ENCODE measurements at regions of chr5 and their contacts with region 1.

Region 1: DNA sequence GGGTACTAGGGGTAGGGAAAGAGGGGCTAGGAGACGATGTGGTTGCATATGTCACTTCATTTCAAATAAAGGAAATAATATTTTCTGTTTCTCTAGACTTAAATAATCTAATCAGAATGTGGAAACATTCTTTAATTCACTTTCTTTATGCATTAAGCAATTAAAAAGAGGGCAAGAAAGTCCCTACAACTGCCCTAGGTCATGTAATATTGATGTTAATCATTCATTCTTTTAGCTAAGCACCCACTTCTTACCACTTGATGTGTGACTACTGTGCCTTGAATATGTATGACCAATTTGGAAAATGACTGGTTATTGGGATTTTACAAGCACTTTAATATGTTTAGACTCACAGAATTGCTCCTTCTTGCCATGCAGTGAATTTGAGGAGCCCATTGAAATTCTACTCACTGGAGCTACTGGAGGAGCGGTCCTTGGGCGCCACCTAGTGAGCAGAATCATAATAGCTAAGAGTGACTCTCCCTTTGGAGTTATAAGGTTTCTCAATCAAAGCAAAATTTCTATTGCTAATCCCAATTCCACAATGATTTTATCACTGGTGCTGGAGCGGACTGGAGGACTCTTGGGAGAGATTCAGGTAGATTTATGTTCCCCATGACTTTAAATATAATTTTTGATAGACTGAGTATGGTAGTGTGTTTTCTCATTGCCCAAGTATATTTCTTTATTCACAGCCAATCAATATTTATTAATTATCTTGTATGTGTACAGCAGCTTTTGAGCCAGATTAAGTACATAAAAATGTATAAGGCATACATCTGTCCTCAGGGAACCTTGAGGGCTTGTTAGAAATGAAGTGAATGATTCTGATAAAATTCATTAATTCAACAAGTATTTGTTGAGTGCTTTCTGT is 225.1 kb downstream of the ADGRV1 start:
- DNase-seq: peak; percentile 32 to 58
- ATAC-seq: peak; percentile 48 to 80 (median 62)
- H3K4me3 ChIP-seq: no peak overlapping the region
- H3K27ac ChIP-seq: no peak overlapping the region
- H3K4me1 ChIP-seq: no peaks in the 10 kb centered on the region
- H3K27me3 ChIP-seq: no peaks in the 10 kb centered on the region
- CTCF ChIP-seq: peak; percentile 88

Region 2: GRCh38 chr5:90434116-90434714 is 349.5 kb before region 1 on chr5:
- intact Hi-C with region 1: loop called (anchors 5 kb)
- DNase-seq: peak in 1 of 2 donors; percentile 56
- ATAC-seq: no peak
- H3K4me3 ChIP-seq: no peak overlapping the region
- H3K27ac ChIP-seq: no peak overlapping the region
- H3K4me1 ChIP-seq: no peaks in the 10 kb centered on the region
- H3K27me3 ChIP-seq: no peaks in the 10 kb centered on the region
- CTCF ChIP-seq: peak; percentile 54

Region 3: GRCh38 chr5:90709323-90710155 is 74.2 kb before region 1 on chr5:
- intact Hi-C with region 1: loop called in 1 of 2 experiments (anchors 2 kb)
- DNase-seq: no peak
- ATAC-seq: no peak
- H3K4me3 ChIP-seq: no peak overlapping the region
- H3K27ac ChIP-seq: no peak overlapping the region
- H3K4me1 ChIP-seq: no peaks in the 10 kb centered on the region
- H3K27me3 ChIP-seq: peaks cover 0 to 2% (median 0%) of the 10 kb centered on the region in 3 donors
- CTCF ChIP-seq: peak; percentile 59

Measured in psoas muscle (tissue), 8 donors.